Sigmoid colon (tissue), 7 donors: ENCODE measurements at regions of chr7 and their contacts with region 1.

Region 1: DNA sequence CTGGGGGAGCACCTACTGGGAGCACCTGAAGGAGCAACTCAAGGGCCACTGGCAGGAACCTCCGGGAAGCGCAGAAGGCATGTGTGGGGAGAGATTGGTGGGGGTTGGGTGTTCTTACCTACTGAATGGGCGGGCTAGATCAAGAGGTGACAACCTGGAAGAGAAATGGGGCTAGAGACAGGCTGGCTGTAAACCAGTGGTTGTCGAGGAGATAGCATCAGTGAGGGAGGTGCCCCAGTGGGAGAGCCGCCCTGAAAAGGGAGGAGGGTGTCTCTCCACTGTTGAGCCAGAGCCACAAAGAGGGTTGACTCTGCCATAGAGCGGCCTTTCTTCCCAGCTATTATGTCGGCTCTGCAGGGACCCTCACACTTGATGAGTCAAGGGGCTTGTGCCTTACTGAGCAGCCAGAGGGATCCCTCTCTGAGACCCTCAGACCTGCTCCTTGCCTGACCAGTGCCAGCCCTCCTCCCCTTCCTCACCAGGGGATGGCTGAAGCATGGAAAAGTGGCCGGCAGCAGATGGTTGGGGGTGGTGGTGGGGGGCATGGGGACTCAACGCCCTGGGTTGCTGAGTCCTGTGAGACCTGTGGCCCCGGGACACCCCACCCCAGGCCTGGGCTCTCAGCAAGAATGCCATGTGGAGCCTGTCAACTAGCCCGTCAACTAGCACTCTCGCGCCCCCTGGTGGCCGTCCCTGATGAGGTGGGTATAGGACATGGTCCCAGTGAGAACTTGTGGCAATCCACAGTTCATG is 36.5 kb upstream of the PURB start:
- DNase-seq: peak; percentile 93
- H3K4me3 ChIP-seq: no peak overlapping the region
- H3K27ac ChIP-seq: no peak overlapping the region
- H3K4me1 ChIP-seq: peaks cover 0 to 5% (median 2%) of the 10 kb centered on the region in 4 donors
- H3K27me3 ChIP-seq: no peaks in the 10 kb centered on the region
- CTCF ChIP-seq: peak; percentile 63 to 90 (median 79)
- EP300 ChIP-seq: no peak
- POLR2A ChIP-seq: no peak

Region 2: GRCh38 chr7:44438816-44439215 is 483.0 kb before region 1 on chr7:
- intact Hi-C with region 1: no loop called
- DNase-seq: no peak
- H3K4me3 ChIP-seq: no peak overlapping the region
- H3K27ac ChIP-seq: no peak overlapping the region
- H3K4me1 ChIP-seq: peaks cover 0 to 21% (median 7%) of the 10 kb centered on the region in 4 donors
- H3K27me3 ChIP-seq: no peaks in the 10 kb centered on the region
- CTCF ChIP-seq: no peak
- EP300 ChIP-seq: no peak
- POLR2A ChIP-seq: no peak

Region 3: DNA sequence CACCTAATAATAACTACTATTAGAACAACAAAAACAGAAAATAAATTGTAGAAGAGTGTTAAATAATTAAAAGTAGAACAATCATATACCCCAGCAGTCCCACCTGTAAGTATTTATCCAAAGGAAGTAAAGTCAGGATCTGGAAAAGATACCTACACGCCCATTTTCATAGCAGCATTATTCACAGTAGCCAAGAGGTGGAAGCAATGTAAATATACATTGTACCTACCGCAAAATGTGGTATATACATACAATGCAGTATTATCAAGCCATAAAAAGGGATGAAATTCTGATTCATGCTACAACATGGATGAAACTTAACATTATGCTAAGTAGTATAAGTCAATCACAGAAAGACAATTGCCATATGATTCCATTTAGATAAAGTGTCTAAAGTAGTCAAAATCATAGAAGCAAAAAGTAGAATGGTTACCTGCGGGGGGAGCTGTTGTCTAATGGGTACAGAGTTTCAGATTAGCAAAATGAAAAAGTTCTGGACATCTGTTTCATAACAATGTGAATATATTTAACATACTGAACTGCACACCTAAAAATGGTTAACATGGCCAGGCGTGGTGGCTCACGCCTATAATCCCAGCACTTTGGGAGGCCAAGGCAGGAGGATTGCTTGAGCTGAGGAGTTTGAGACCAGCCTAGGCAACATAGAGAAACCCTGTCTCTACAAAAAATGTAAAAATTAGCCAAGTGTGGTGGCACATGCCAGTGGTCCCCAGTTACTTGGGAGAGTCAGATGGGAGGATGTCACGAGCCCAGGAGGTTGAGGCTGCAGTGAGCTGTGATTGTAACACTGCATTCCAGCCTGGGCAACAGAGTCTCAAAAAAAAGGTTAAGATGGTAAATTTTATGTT is 333.7 kb before region 1 on chr7:
- intact Hi-C with region 1: loop called (anchors 1 kb)
- DNase-seq: no peak
- H3K4me3 ChIP-seq: no peak overlapping the region
- H3K27ac ChIP-seq: no peak overlapping the region
- H3K4me1 ChIP-seq: peaks cover 0 to 2% (median under 1%) of the 10 kb centered on the region in 4 donors
- H3K27me3 ChIP-seq: no peaks in the 10 kb centered on the region
- CTCF ChIP-seq: peak in 3 of 4 experiments; percentile 21 to 57 (median 54)
- EP300 ChIP-seq: no peak
- POLR2A ChIP-seq: no peak

Region 4: GRCh38 chr7:44858161-44858560 is 63.6 kb before region 1 on chr7:
- intact Hi-C with region 1: loop called (anchors 1 kb)
- DNase-seq: no peak
- H3K4me3 ChIP-seq: no peak overlapping the region
- H3K27ac ChIP-seq: no peak overlapping the region
- H3K4me1 ChIP-seq: no peaks in the 10 kb centered on the region
- H3K27me3 ChIP-seq: no peaks in the 10 kb centered on the region
- CTCF ChIP-seq: no peak
- EP300 ChIP-seq: no peak
- POLR2A ChIP-seq: no peak